Activated CD8-positive, alpha-beta T cell treated with anti-CD3 and anti-CD28 coated beads for 36 hours (primary cell): ENCODE measurements at regions of chr7 and their contacts with region 1.

Region 1: GRCh38 chr7:128425850-128426249 is 16.1 kb upstream of the IMPDH1 start:
- DNase-seq: peak; percentile 93
- ATAC-seq: peak; percentile 82
- H3K4me3 Mint-ChIP-seq: no peak overlapping the region
- H3K27ac Mint-ChIP-seq: no peak overlapping the region
- H3K4me1 Mint-ChIP-seq: peaks cover 21% of the 10 kb centered on the region
- H3K27me3 Mint-ChIP-seq: peaks cover 12% of the 10 kb centered on the region
- CTCF ChIP-seq: peak; percentile 97

Region 2: DNA sequence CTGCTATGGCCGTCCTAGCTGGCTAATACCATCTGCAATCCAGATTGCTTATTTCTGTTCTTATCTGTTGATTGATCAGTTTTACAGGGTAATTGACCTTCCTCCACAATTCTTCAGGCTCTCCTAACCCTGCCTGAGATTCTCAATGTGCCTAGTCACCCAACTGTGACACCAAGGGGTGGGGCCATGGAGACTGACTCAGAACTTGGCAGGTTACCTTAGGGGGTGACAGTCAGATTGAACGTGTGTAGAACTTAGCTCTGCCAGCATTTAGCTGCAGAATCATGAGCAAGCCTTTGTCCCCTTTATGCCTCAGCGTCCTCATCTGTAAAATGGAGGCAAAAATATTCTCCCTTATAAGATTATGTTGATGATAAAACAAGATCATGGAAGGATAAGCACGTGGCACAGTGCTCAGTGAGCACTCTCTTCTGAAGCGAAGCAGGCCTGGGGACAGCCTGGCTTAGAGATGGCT is 203.9 kb before region 1 on chr7:
- CTCF ChIA-PET with region 1: no interaction called
- POLR2A ChIA-PET with region 1: no interaction called
- intact Hi-C with region 1: no loop called
- DNase-seq: peak; percentile 27
- ATAC-seq: peak; percentile 71
- H3K4me3 Mint-ChIP-seq: no peak overlapping the region
- H3K27ac Mint-ChIP-seq: no peak overlapping the region
- H3K4me1 Mint-ChIP-seq: no peaks in the 10 kb centered on the region
- H3K27me3 Mint-ChIP-seq: peaks cover 4% of the 10 kb centered on the region
- CTCF ChIP-seq: no peak

Region 3: GRCh38 chr7:128247108-128247675 is 178.7 kb before region 1 on chr7:
- CTCF ChIA-PET with region 1: no interaction called
- POLR2A ChIA-PET with region 1: no interaction called
- intact Hi-C with region 1: no loop called
- DNase-seq: no peak
- ATAC-seq: no peak
- H3K4me3 Mint-ChIP-seq: no peak overlapping the region
- H3K27ac Mint-ChIP-seq: no peak overlapping the region
- H3K4me1 Mint-ChIP-seq: no peaks in the 10 kb centered on the region
- H3K27me3 Mint-ChIP-seq: peaks cover 1% of the 10 kb centered on the region
- CTCF ChIP-seq: no peak

Region 4: GRCh38 chr7:128304212-128304611 is 121.6 kb before region 1 on chr7:
- CTCF ChIA-PET with region 1: no interaction called
- POLR2A ChIA-PET with region 1: no interaction called
- intact Hi-C with region 1: no loop called
- DNase-seq: no peak
- ATAC-seq: no peak
- H3K4me3 Mint-ChIP-seq: no peak overlapping the region
- H3K27ac Mint-ChIP-seq: no peak overlapping the region
- H3K4me1 Mint-ChIP-seq: no peaks in the 10 kb centered on the region
- H3K27me3 Mint-ChIP-seq: no peaks in the 10 kb centered on the region
- CTCF ChIP-seq: no peak

Region 5: GRCh38 chr7:128343554-128344430 is 82.1 kb before region 1 on chr7 and contains the start of gene RBM28:
- CTCF ChIA-PET with region 1: interaction called, 58 read pairs
- POLR2A ChIA-PET with region 1: no interaction called
- intact Hi-C with region 1: no loop called
- DNase-seq: peak; percentile 90
- ATAC-seq: peak; percentile 97
- H3K4me3 Mint-ChIP-seq: peak within 1 kb of the TSS; percentile 85
- H3K27ac Mint-ChIP-seq: peak within 1 kb of the TSS; percentile 93
- H3K4me1 Mint-ChIP-seq: peaks cover 26% of the 10 kb centered on the region
- H3K27me3 Mint-ChIP-seq: peaks cover 3% of the 10 kb centered on the region
- CTCF ChIP-seq: no peak
- total RNA-seq, gene RBM28: 55.3 to 55.6 TPM

Region 6: DNA sequence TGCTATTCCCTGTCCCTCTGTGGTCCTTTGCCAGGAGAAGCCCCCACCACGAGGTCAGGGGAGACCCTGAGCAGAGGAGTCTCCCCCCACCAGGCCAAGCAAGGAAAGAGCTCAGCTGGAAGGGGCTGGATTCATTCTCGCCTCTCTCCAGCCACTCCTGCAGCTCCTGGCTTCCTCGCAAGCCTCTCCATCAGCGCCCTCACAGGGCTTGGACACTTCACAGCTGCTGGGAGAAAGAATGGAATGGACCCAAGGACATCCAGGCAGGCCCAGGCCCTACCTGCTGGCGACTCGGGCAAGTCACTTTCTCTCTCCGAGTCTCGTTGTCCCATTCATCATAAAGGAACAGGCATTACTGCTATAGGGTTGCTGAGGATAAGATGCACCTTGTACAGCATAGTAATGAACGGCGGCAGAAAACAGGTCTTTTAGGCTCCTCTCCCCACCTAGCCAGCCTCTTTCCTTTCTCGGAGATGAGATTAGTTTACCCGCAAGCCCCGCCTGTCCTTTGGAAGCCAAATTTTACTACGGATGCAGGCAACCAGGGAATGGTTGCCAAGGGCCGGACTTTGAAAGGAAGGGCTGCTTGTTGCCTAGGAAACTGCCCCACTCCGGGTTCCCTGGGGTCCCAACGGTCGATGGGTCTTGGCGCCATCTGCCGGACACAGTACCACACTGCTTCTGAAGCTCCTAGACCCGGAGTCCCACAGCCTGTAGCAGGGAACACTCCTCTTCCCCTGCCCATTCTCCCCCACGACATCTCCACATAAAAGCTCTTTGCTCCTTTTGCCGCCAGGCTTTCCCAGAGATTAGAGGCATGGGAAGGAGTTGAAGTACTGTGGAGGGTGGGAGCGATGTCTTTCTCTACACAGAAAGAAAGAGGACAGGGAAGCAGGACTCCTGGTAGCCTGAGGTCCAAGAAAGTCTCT is 38.4 kb before region 1 on chr7:
- CTCF ChIA-PET with region 1: interaction called, 84 read pairs
- POLR2A ChIA-PET with region 1: no interaction called
- intact Hi-C with region 1: no loop called
- DNase-seq: peak; percentile 85
- ATAC-seq: peak; percentile 95
- H3K4me3 Mint-ChIP-seq: no peak overlapping the region
- H3K27ac Mint-ChIP-seq: no peak overlapping the region
- H3K4me1 Mint-ChIP-seq: no peaks in the 10 kb centered on the region
- H3K27me3 Mint-ChIP-seq: no peaks in the 10 kb centered on the region
- CTCF ChIP-seq: peak; percentile 88

Region 7: DNA sequence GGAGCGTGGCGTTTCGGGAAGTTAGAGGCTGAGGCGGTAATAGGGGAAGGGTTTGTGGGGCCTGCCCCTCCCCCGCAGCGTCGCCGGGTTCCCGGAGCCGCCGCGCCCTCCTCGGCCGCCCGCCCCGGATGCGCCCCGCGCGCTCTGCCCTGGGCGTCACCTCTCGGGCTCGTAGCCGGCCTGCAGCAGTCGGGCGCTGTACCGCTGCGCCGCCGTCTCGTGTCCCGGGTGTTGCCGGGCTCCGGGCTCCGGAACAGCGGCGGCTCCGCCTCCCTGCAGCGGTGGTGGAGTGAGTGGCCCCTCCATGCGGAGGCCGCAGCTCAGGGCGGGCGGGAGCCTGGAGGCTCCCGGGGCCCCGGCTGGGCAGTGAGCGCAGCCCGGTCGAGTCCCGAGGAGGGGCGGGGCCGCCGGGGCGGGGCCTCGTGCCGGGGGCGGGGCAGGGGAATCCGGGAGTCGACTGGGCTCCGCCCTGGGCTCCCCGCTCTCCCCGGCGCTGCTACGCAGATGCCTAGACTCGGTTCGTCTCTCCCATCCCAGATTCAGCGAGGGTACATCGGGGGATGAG is 16.2 kb before region 1 on chr7 and contains the start of gene IMPDH1:
- CTCF ChIA-PET with region 1: interaction called, 256 read pairs
- POLR2A ChIA-PET with region 1: interaction called, 5 read pairs
- intact Hi-C with region 1: no loop called
- DNase-seq: peak; percentile 85
- ATAC-seq: peak; percentile 84
- H3K4me3 Mint-ChIP-seq: peak within 1 kb of the TSS; percentile 76
- H3K27ac Mint-ChIP-seq: peak within 1 kb of the TSS; percentile 59
- H3K4me1 Mint-ChIP-seq: peaks cover 18% of the 10 kb centered on the region
- H3K27me3 Mint-ChIP-seq: peaks cover 10% of the 10 kb centered on the region
- CTCF ChIP-seq: no peak
- total RNA-seq, gene IMPDH1: 60.5 to 68.1 TPM

Region 8: DNA sequence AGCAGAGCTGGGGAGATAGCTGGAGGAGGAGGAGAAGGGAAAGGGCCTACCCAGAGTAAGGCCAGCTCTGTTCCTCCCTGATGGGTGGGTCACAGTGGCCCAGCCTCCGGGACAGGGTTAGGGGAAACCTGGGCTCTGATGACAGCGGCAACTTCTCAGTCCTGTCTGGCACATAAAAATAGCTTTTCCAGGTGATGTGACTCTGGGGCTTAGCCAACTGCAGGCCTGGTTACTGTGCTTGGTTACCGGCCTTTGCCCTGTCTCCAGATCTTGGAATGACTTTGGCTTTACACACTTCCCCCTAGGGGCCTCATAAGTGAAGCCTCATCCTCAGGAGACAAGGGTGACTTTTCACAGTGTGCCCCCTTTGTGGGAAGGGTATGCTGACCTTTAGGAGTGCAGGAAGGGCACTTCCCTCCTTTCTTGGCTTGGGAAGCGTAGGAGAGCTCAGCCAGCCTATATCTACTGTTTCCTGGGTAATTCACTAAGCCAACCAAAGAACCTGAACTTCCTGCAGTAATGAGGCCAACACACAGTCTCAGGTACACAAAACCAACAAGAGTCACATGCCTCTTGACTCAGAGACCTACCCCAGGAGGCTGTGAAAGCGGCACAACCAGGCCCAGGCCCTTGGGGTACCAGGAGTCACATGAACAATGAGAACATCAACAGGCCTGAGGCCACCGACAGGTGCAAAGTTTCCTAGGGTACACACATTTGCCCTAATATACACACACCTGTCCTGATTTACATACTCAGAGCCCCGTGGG is 18.2 kb after region 1 on chr7:
- CTCF ChIA-PET with region 1: interaction called, 52 read pairs
- POLR2A ChIA-PET with region 1: interaction called, 4 read pairs
- intact Hi-C with region 1: no loop called
- DNase-seq: peak; percentile 42
- ATAC-seq: peak; percentile 79
- H3K4me3 Mint-ChIP-seq: no peak overlapping the region
- H3K27ac Mint-ChIP-seq: no peak overlapping the region
- H3K4me1 Mint-ChIP-seq: peaks cover 21% of the 10 kb centered on the region
- H3K27me3 Mint-ChIP-seq: no peaks in the 10 kb centered on the region
- CTCF ChIP-seq: no peak

Region 9: DNA sequence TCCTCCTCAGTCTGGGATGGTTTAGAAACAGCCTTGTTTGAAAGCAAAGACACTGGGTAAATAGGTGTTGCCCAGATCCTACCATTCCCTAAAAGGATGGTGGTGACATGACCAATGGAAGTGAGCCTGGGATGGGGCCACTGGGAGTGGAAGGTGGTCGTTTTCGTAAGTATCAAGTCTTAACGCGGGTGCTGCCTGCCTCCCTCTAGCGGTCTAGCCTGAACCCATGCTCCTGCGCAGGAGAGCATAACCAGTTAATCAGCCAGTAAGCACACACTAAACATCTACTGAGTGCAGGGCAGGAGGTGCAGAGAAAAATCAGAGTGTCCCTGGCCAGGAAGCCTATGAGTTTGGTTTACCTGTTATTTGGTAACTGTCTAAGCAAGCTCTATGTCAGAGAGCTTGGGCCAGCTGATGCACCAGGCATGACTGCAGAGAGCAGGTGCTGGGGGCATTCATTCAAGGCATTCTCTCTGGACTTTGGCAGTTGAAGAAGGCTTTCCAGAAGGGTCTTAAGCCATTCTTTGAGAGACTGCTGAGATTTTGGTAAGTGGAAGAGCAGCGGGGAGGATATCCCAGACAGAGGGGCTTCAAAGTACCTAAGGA is 247.2 kb after region 1 on chr7:
- CTCF ChIA-PET with region 1: interaction called, 14 read pairs
- POLR2A ChIA-PET with region 1: no interaction called
- intact Hi-C with region 1: no loop called
- DNase-seq: peak; percentile 54
- ATAC-seq: peak; percentile 69
- H3K4me3 Mint-ChIP-seq: no peak overlapping the region
- H3K27ac Mint-ChIP-seq: no peak overlapping the region
- H3K4me1 Mint-ChIP-seq: no peaks in the 10 kb centered on the region
- H3K27me3 Mint-ChIP-seq: peaks cover 2% of the 10 kb centered on the region
- CTCF ChIP-seq: peak; percentile 38